Common myeloid progenitor, CD34-positive (primary cell): ENCODE measurements at regions of chrX and their contacts with region 1.

Region 1: GRCh38 chrX:37926700-37927099 is 79.3 kb upstream of the DYNLT3 start:
- DNase-seq: peak; percentile 9 to 40 (median 38)
- H3K4me3 ChIP-seq: no peak overlapping the region
- H3K27ac ChIP-seq: no peak overlapping the region
- H3K4me1 ChIP-seq: no peaks in the 10 kb centered on the region
- H3K27me3 ChIP-seq: peaks cover 0 to 2% (median 0%) of the 10 kb centered on the region in 5 experiments

Region 2: DNA sequence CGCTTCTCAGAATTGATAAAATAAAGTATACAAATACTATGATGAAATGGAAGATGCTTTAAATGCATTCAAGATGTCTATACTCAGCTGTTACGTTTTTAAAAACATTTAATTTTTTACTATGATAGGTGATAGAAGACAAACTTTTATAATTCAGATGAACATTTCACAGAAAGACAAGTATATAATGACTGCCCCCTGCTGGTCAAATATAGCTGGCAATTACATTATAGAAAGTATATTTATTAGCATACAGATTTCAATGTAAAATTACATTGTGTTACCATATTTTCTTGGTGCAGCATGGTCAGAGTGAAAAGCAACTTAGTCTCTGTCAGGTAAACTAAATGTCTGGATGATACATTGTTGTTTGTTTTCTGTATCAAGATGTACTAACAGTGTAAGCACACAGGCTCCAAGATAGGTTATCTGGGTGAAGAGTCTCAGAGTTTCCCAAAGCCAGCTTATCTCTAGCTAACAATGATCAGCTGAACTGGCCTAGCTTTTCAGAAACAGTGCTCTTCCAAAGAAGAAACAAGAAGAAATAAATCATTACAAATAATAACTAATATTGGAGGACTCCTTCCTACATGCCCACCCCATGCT is 239.9 kb after region 1 on chrX:
- CTCF ChIA-PET with region 1: interaction called, 11 read pairs
- POLR2A ChIA-PET with region 1: no interaction called
- DNase-seq: peak; percentile 7 to 55 (median 37)
- H3K4me3 ChIP-seq: no peak overlapping the region
- H3K27ac ChIP-seq: no peak overlapping the region
- H3K4me1 ChIP-seq: no peaks in the 10 kb centered on the region
- H3K27me3 ChIP-seq: no peaks in the 10 kb centered on the region